Left ventricle myocardium superior (tissue), 1 donor: ENCODE measurements at regions of chr5 and their contacts with region 1.

Region 1: DNA sequence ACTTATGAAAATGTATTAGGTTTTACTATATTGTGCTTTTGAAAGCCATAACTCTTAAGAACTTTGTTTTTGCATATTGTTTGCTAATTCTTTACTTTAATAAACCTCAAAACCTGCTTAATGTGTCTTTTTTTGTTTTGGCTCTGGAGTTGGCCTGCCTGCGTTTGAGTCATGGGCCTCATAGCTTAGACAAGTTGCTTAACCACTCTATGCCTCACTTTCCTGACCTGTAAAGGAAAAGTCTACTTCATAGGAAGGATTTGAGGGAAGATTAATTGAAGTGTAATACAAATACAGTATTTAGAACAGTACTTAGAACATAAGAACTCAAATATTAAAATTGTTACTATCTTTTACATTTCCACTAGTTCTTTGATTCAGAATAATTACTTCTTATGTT is 10.3 kb downstream of the SMIM32 start:
- DNase-seq: no peak
- ATAC-seq: no peak

Region 2: DNA sequence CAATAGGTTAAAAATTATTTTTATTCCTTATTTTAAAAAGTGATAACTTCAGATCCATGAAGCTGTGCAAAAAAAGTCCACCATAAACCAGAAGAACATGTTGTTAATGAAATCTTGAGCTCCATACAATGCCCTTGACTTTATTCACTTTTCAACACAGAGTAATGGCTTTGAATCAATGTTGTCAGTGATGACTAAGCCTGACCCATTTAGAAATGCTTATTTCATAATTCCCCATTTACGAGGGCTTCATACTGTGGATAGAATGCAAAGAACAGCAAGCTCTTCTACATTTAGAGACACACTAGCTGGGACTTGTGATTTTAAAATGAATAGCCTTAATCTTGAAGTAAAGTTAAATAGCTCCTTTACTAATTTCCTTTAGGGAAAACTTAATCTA is 261.2 kb before region 1 on chr5:
- intact Hi-C with region 1: loop called (anchors 10 kb)
- DNase-seq: no peak
- ATAC-seq: no peak